Heart left ventricle (tissue), 16 donors: ENCODE measurements at regions of chr16 and their contacts with region 1.

Region 1: DNA sequence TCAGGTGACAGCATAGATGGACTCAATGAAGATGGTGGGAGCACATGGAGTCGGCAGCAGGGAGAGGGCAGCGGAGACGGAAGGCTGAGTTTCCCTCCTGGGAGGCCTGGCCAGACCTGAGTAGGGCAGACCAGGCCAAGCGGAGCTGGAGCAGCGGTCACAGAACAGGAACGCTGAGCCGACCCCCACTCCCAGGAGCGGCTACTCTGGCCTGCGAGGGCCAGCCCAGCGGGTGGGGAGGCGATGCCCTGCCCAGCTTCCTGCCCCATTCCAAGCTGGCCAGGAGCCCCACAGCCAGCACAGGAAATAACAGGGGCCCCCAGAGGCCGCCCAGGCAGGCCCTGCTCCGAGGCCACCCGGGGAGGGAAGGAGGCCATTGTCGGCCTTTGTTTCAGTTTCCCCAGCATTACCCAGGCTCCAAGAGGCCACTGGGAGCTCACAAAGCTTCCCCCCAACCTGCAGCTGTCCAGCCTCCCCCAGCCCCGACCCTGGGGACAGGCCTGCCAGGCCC is 79.8 kb downstream of the ZNF423 start:
- DNase-seq: peak; percentile 59 to 82 (median 65)
- ATAC-seq: peak; percentile 64 to 84 (median 70)
- H3K4me3 ChIP-seq: peak overlapping the region in 4 of 12 donors; percentile 3 to 28 (median 12)
- H3K27ac ChIP-seq: peak overlapping the region; percentile 28 to 73 (median 63)
- H3K4me1 ChIP-seq: peaks cover 3 to 63% (median 32%) of the 10 kb centered on the region in 12 donors
- H3K27me3 ChIP-seq: no peaks in the 10 kb centered on the region
- CTCF ChIP-seq: no peak
- POLR2A ChIP-seq: no peak

Region 2: GRCh38 chr16:49824593-49824992 is 48.5 kb after region 1 on chr16:
- intact Hi-C with region 1: loop called in 1 of 10 experiments (anchors 2 kb)
- DNase-seq: no peak
- ATAC-seq: peak in 1 of 4 donors; percentile 16
- H3K4me3 ChIP-seq: no peak overlapping the region
- H3K27ac ChIP-seq: peak overlapping the region in 10 of 12 donors; percentile 21 to 66 (median 52)
- H3K4me1 ChIP-seq: peaks cover 0 to 58% (median 39%) of the 10 kb centered on the region in 12 donors
- H3K27me3 ChIP-seq: no peaks in the 10 kb centered on the region
- CTCF ChIP-seq: no peak
- POLR2A ChIP-seq: no peak

Region 3: GRCh38 chr16:49844359-49844758 is 68.2 kb after region 1 on chr16:
- intact Hi-C with region 1: loop called in 1 of 10 experiments (anchors 5 kb)
- DNase-seq: no peak
- ATAC-seq: no peak
- H3K4me3 ChIP-seq: no peak overlapping the region
- H3K27ac ChIP-seq: no peak overlapping the region
- H3K4me1 ChIP-seq: peaks cover 0 to 19% (median 4%) of the 10 kb centered on the region in 12 donors
- H3K27me3 ChIP-seq: peaks cover 0 to 3% (median 0%) of the 10 kb centered on the region in 9 donors
- CTCF ChIP-seq: no peak
- POLR2A ChIP-seq: no peak

Region 4: DNA sequence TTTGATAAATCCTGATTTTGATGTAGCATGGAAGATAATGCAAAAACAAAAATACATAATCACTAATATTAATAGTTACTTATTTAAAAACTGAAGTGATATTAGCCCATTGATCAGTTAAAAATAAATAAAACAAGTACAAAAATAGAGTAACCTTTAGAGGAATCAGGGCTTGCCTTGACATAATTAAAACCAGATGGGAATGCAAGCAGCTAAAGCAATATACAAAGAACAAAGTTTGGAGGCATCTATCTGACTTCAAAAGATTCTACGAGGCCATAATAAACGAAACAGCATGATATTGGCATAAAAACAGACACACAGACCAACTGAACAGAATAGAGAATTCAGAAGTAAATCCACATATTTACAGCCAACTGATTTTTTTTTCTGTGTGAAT is 274.7 kb after region 1 on chr16:
- intact Hi-C with region 1: no loop called
- DNase-seq: no peak
- ATAC-seq: no peak
- H3K4me3 ChIP-seq: no peak overlapping the region
- H3K27ac ChIP-seq: no peak overlapping the region
- H3K4me1 ChIP-seq: no peaks in the 10 kb centered on the region
- H3K27me3 ChIP-seq: no peaks in the 10 kb centered on the region
- CTCF ChIP-seq: no peak
- POLR2A ChIP-seq: no peak